Activated T-helper 1 cell treated with anti-CD3 and anti-CD28 coated beads, Interleukin-12 subunit alpha, Interleukin-12 subunit beta, Interleukin-2, Interleukin-4 antibody, amounts not matched to agents 30 ng/mL and 10 ng/mL and 1 ng/mL, durations not matched to agents 14 hours and 24 hours and 36 hours (primary cell): ENCODE measurements at regions of chr12 and their contacts with region 1.

Region 1: DNA sequence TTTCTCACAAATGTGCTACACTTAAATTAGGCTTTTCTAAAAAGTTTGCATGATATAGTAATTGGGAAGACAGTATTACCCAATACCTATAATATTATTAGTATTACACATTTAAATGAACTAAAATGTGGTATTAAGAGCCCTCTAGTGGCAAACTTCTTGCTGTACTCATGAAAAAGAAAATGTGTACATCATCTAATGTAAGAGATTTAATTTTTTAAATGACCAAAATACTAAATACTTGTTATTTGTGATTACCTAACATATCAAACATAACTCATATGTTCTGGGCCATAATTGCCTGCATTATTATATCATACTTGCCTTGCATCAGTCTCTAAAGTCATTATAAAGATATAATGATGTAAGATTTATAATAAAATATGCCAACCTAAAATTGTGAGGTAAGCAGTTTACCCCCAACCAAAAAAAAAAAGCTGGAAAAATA is 64.2 kb downstream of the DNAI7 start:
- DNase-seq: no peak
- H3K4me3 Mint-ChIP-seq: no peak overlapping the region
- H3K27ac Mint-ChIP-seq: no peak overlapping the region
- H3K4me1 Mint-ChIP-seq: no peaks in the 10 kb centered on the region
- H3K27me3 Mint-ChIP-seq: peaks cover 3% of the 10 kb centered on the region

Region 2: GRCh38 chr12:24852420-24852819 is 278.3 kb before region 1 on chr12:
- intact Hi-C with region 1: loop called (anchors 5 kb)
- DNase-seq: no peak
- H3K4me3 Mint-ChIP-seq: no peak overlapping the region
- H3K27ac Mint-ChIP-seq: no peak overlapping the region
- H3K4me1 Mint-ChIP-seq: peaks cover 14% of the 10 kb centered on the region
- H3K27me3 Mint-ChIP-seq: peaks cover 2% of the 10 kb centered on the region

Region 3: GRCh38 chr12:25195056-25195971 is 64.5 kb after region 1 on chr12 and contains the starts of genes DNAI7 and ETFRF1:
- intact Hi-C with region 1: no loop called
- DNase-seq: peak; percentile 92
- H3K4me3 Mint-ChIP-seq: peak within 1 kb of the TSS; percentile 98
- H3K27ac Mint-ChIP-seq: peak within 1 kb of the TSS; percentile 95
- H3K4me1 Mint-ChIP-seq: peaks cover 23% of the 10 kb centered on the region
- H3K27me3 Mint-ChIP-seq: peaks cover 2% of the 10 kb centered on the region
- total RNA-seq, gene DNAI7: 0.23 TPM in 1 of 2 replicates, not detected in the other
- total RNA-seq, gene ETFRF1: 9.7 and 10.4 TPM in 2 replicates